ENCODE measurements at regions of chr2 and their contacts with region 1.

Region 1: DNA sequence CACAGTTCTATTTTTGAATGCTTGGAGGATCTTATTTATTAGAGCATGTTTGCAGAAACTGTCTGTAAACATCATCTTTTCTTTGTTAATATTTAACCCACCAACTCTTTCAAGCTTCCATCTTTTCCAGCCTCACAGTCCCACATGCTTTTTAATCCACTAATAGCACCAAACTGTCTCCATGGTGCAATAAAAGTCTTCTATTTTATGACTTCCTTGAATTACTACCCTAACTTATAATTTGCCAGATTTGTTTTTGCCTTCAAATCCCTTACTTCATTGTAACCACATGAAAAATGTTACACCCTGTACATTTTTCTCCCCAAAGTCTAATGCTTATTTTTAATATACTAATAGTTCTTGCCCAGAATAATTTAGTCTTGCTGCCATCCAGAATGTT is 792.6 kb downstream of the PLCL1 start:
- DNase-seq: no peak
- H3K4me3 ChIP-seq: no peak overlapping the region
- H3K27ac ChIP-seq: no peak overlapping the region
- H3K4me1 ChIP-seq: no peaks in the 10 kb centered on the region
- H3K27me3 ChIP-seq: peaks cover 4% of the 10 kb centered on the region
- CTCF ChIP-seq: no peak

Region 2: DNA sequence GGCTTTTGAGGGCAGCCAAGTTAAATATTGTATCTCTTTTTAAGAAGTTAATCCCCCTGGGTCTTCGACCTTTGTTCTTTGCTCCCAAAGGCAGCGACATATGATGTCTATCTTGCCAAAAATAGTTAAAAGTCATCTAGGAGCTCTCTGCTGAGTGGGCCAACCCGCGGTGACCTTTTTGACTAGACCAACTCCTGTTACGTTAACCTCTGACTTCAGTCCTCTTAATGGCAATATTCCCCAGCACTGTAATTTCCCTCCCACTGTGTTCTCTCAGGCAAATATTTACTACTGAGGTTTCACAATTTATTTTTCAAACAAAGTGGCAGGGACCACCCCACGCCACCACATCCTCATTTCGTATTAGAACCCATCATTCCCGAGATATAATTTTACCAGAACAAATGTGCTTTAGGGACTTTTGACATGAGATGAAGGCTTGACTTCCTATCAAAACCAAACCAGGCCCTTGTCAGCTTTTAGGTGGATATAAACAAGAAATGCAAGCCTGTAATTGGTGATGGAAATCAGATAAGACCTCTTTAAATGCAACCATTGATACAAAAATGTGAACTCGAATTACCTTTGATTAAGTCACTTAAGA is 96.0 kb after region 1 on chr2:
- CTCF ChIA-PET with region 1: no interaction called
- dilution Hi-C with region 1: loop called (anchors 5 kb)
- in situ Hi-C with region 1: no loop called
- intact Hi-C with region 1: no loop called
- DNase-seq: no peak
- H3K4me3 ChIP-seq: no peak overlapping the region
- H3K27ac ChIP-seq: no peak overlapping the region
- H3K4me1 ChIP-seq: no peaks in the 10 kb centered on the region
- H3K27me3 ChIP-seq: peaks cover 2% of the 10 kb centered on the region
- CTCF ChIP-seq: no peak

Measured in mammary epithelial cell (primary cell).